K562 (cell line): ENCODE measurements at regions of chr5 and their contacts with region 1.

Region 1: DNA sequence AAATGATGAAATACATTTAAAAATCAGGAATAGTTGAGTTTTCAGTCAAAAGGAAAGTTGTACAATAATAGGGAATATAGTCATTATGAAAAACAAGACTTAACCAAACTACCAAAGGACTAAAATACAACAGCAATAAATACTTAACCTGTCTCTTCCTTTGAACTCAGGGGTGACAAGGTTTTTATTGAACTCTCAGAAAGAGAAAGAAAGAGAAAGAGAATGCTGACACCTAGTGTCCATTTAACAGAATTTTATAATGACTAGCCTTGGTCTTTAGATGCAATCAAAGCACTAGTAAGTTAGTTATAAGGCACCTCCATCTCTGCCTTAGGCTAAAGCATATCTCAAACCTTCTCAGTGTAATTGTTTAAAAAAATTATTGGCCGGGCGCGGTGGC is 47.5 kb downstream of the UIMC1 start:
- DNase-seq: peak; percentile 36 to 54 (median 43)
- ATAC-seq: peak; percentile 89
- H3K4me3 ChIP-seq: no peak overlapping the region
- H3K27ac ChIP-seq: no peak overlapping the region
- H3K4me1 ChIP-seq: no peaks in the 10 kb centered on the region
- H3K27me3 ChIP-seq: no peaks in the 10 kb centered on the region
- CTCF ChIP-seq: peak; percentile 34 to 70 (median 46); a peak in 4 of 6 replicates
- EP300 ChIP-seq: no peak
- POLR2A ChIP-seq: no peak
- RAD21 ChIP-seq: peak; percentile 41 to 70

Region 2: GRCh38 chr5:176812269-176813259 is 146.5 kb before region 1 on chr5:
- CTCF ChIA-PET with region 1: interaction called, 3 read pairs
- POLR2A ChIA-PET with region 1: no interaction called
- in situ Hi-C with region 1: no loop called
- intact Hi-C with region 1: loop called (anchors 2 kb)
- DNase-seq: peak; percentile 60 to 76 (median 62)
- ATAC-seq: peak; percentile 89
- H3K4me3 ChIP-seq: no peak overlapping the region
- H3K27ac ChIP-seq: no peak overlapping the region
- H3K4me1 ChIP-seq: peaks cover 0 to 37% of the 10 kb centered on the region in 2 experiments; a peak in 2 of 5 replicates
- H3K27me3 ChIP-seq: peaks cover 35 to 84% of the 10 kb centered on the region in 2 experiments; a peak in 4 of 5 replicates
- CTCF ChIP-seq: peak; percentile 70 to 80 (median 77)
- EP300 ChIP-seq: no peak
- POLR2A ChIP-seq: no peak
- RAD21 ChIP-seq: peak in 1 of 2 experiments; percentile 78; a peak in 3 of 4 replicates

Region 3: DNA sequence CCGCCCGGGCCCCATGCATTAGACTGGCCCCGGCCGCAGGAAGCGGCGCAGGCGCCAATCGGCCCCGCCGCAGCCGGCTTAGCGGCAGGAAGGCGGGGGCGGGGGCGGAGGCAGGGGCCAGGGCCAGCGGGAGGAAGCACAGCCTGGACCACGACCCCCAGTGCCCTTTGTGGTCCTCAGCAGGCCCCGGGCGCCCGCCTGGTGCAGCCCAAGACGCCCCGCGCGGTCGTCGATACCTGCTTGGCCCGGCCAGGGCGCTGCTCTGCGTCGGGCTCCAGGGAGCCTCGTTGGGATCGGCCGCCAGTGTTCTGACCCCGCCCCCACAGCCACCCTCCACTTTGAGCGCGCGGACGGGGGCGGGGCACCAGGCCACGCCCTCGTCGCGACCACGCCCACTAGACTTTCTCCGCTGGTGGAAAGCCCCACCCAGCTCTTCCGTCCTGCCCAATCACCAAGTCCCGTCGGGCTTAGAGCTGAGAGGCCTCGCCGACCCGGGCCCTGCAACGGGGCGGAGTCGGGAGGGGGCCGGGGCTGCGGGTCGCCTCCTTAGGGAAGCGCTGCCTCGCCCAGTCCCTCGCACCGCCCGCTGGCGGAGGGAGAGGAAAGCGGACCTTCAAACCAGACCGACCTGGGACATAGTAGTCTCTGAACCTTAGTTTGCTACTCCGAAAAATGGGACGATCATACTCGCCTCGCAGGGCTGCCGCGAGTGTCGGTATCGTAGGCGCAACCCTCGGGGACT is 538.4 kb after region 1 on chr5 and contains the start of gene PDLIM7:
- CTCF ChIA-PET with region 1: no interaction called
- POLR2A ChIA-PET with region 1: no interaction called
- in situ Hi-C with region 1: no loop called
- intact Hi-C with region 1: no loop called
- DNase-seq: peak; percentile 97 to 99 (median 98)
- ATAC-seq: peak; percentile 81
- H3K4me3 ChIP-seq: peak within 1 kb of the TSS; percentile 82
- H3K27ac ChIP-seq: peak within 1 kb of the TSS; percentile 95
- H3K4me1 ChIP-seq: peaks cover 57 to 85% of the 10 kb centered on the region in 2 experiments
- H3K27me3 ChIP-seq: no peaks in the 10 kb centered on the region
- CTCF ChIP-seq: peak; percentile 31 to 37 (median 35); a peak in 2 of 6 replicates
- EP300 ChIP-seq: no peak; the same call in none of the 2 replicates
- POLR2A ChIP-seq: peak; percentile 97
- RAD21 ChIP-seq: 0 out of 4 replicates have a peak, but pooled peaks of 1 of the 2 experiments have one; percentile 2
- polyA plus RNA-seq, gene PDLIM7: 2.1 to 4.1 TPM